SK-N-SH (cell line): ENCODE measurements at regions of chr18 and their contacts with region 1.

Region 1: DNA sequence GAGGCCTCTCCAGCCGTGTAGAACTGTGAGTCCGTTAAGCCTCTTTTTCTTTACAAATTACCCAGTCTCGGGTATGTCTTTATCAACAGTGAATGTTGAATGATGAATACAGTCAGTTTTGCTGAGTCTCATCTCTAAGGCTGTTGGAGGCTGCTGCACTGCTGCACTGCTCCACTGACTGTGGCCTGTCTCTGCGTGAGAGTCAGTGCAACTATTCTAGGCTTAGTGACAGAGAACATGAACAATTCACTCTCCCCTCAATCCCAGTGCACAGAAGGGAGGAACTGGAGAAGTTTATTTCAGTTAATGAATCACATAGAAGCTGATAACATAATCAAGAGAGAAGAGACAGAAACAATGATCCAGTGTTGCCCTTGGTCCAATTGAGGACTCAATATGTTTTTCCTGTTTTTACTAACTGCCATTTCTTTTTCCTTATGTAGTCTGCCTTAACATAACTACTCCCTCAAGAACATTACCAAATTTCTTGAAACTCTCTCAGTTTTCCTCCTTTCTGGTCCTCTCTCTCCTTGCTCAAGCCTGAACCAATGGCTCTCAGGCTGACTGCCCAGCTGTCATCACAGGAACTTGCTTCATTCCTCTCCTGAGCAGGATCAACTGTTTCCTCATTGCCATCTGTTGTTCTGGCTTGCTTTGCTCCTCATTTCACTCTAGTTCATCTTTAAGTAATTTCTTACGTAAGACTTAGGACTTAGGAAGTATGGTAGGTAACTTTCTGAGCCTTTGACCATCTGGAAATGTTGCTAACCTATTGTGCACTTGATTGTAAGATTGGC is 483.2 kb downstream of the METTL4 start:
- DNase-seq: no peak
- H3K4me3 ChIP-seq: no peak overlapping the region
- H3K27ac ChIP-seq: no peak overlapping the region
- H3K4me1 ChIP-seq: no peaks in the 10 kb centered on the region
- H3K27me3 ChIP-seq: no peaks in the 10 kb centered on the region
- CTCF ChIP-seq: no peak
- EP300 ChIP-seq: no peak
- RAD21 ChIP-seq: no peak

Region 2: GRCh38 chr18:2104620-2105462 is 16.8 kb after region 1 on chr18:
- CTCF ChIA-PET with region 1: interaction called, 27 read pairs
- POLR2A ChIA-PET with region 1: no interaction called
- DNase-seq: peak; percentile 62
- H3K4me3 ChIP-seq: peak overlapping the region in 1 of 2 experiments; percentile 30; a peak in 2 of 4 replicates
- H3K27ac ChIP-seq: no peak overlapping the region
- H3K4me1 ChIP-seq: no peaks in the 10 kb centered on the region
- H3K27me3 ChIP-seq: no peaks in the 10 kb centered on the region
- CTCF ChIP-seq: peak; percentile 85
- EP300 ChIP-seq: no peak
- RAD21 ChIP-seq: peak; percentile 59

Region 3: DNA sequence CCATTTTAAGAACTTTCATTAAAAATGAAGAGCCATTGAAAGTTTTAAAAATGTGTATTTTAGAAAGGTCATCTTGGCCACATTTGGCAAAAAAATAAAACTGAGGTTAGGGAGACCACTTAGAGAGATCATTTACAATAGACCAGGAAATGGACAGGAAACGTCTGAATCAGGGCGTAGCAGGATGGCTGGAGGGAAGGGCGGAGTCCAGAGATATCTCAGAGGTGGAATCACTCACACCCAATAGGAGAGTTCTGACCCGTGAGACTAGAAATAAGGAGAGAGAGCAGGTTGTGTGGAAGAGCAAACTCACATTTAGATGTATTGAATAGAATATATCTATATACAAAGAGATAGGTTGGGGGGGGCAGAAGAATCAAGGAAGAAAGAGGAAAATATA is 109.9 kb after region 1 on chr18:
- CTCF ChIA-PET with region 1: no interaction called
- POLR2A ChIA-PET with region 1: no interaction called
- DNase-seq: no peak
- H3K4me3 ChIP-seq: no peak overlapping the region
- H3K27ac ChIP-seq: no peak overlapping the region
- H3K4me1 ChIP-seq: no peaks in the 10 kb centered on the region
- H3K27me3 ChIP-seq: no peaks in the 10 kb centered on the region
- CTCF ChIP-seq: no peak
- EP300 ChIP-seq: no peak
- RAD21 ChIP-seq: no peak